ENCODE measurements at regions of chr2 and their contacts with region 1.

Region 1: DNA sequence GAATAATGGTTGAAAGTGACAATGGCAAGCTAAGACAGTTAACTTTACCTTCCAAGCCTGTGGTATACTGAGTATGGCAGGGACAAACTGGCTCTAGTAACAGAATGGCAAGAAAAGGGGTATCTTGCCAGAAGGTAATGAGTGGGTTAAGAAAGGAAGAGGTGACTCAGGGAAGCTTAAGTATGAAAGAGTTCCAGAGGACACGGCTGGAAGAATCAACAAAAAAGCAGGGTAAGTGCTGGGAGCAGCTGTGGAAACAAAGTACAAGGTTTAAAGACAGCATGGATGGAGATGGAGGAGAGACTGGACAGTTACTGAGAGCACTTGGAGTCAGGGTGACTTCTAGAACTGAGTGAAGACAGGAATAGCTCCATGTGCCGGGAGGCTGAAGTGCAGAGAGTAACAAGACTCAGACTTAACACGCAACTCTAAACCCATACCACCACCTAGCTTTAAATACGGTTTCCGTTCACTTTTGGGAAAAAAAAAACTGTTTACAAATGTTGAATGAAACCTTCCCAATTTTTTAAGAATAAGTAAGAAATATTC is 69.0 kb downstream of the REV1 start:
- DNase-seq: no peak
- ATAC-seq: peak; percentile 75 to 89 (median 84)
- H3K4me3 ChIP-seq: no peak overlapping the region
- H3K27ac ChIP-seq: peak overlapping the region in 7 of 10 donors; percentile 6 to 60 (median 29)
- H3K4me1 ChIP-seq: peaks cover 0 to 47% (median 16%) of the 10 kb centered on the region in 9 donors
- H3K27me3 ChIP-seq: no peaks in the 10 kb centered on the region
- CTCF ChIP-seq: peak in 3 of 9 donors; percentile 13 to 36 (median 13)

Region 2: DNA sequence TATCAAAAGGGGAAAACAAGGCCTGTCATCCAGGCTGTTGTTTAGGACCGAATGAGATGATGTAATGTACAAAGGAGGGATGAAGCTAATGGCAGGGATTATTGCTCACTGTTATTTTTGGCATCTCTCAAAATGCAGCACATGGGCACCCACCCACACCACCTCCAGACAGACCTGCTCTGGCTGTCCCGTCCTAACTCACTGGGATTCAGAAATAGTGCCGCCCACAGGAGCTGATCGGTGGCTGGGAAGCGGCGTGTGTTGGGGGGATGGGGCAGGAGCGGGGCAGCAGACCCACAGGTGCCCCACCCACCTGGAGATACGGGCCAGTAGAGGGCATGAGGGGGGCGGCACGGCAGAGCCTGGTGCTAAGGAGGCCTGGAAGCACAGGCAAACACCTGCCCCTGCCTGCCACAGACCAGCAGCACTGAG is 537.0 kb before region 1 on chr2:
- intact Hi-C with region 1: no loop called
- DNase-seq: no peak
- ATAC-seq: no peak
- H3K4me3 ChIP-seq: no peak overlapping the region
- H3K27ac ChIP-seq: no peak overlapping the region
- H3K4me1 ChIP-seq: no peaks in the 10 kb centered on the region
- H3K27me3 ChIP-seq: peaks cover 0 to 14% (median 0%) of the 10 kb centered on the region in 7 donors
- CTCF ChIP-seq: no peak

Region 3: GRCh38 chr2:99337113-99338028 is 83.5 kb before region 1 on chr2 and contains the start of gene EIF5B:
- intact Hi-C with region 1: loop called in 1 of 10 experiments (anchors 5 kb)
- DNase-seq: peak; percentile 95 to 97
- ATAC-seq: peak; percentile 91 to 96 (median 94)
- H3K4me3 ChIP-seq: peak within 1 kb of the TSS; percentile 66 to 100 (median 90)
- H3K27ac ChIP-seq: peak within 1 kb of the TSS; percentile 55 to 98 (median 89)
- H3K4me1 ChIP-seq: peaks cover 3 to 57% (median 42%) of the 10 kb centered on the region in 9 donors
- H3K27me3 ChIP-seq: no peaks in the 10 kb centered on the region
- CTCF ChIP-seq: peak; percentile 40 to 89 (median 70)
- total RNA-seq, gene EIF5B: 64.5 to 123 (median 91.8) TPM

Region 4: GRCh38 chr2:99403524-99403923 is 17.3 kb before region 1 on chr2:
- intact Hi-C with region 1: loop called in 1 of 10 experiments (anchors 2 kb)
- DNase-seq: no peak
- ATAC-seq: peak; percentile 49 to 73 (median 58)
- H3K4me3 ChIP-seq: peak overlapping the region in 2 of 10 donors; percentile 12 to 26
- H3K27ac ChIP-seq: peak overlapping the region in 9 of 10 donors; percentile 3 to 83 (median 57)
- H3K4me1 ChIP-seq: peaks cover 0 to 40% (median 15%) of the 10 kb centered on the region in 9 donors
- H3K27me3 ChIP-seq: no peaks in the 10 kb centered on the region
- CTCF ChIP-seq: peak in 3 of 9 donors; percentile 30 to 32 (median 31)

Region 5: DNA sequence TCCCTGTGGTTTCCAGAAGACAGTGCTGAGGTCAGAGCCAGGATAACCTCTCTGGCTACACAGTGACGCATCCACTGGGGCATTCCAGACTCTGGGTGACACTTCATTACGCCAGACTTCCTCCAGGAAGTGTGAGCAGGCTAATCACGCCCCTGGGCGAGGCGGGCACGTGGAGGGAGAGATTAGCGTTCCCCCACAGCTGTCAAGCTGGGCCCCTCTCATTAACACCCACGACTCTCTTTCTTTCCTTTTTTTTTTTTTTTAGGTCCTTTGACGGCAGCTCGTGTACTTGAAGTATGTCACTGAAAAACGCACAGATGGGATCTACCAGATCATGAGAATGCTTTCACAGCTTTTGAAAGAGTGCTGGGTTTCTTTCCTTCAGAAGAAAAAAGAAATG is 446.9 kb after region 1 on chr2:
- intact Hi-C with region 1: no loop called
- DNase-seq: no peak
- ATAC-seq: peak in 3 of 8 donors; percentile 28 to 64 (median 32)
- H3K4me3 ChIP-seq: no peak overlapping the region
- H3K27ac ChIP-seq: no peak overlapping the region
- H3K4me1 ChIP-seq: peaks cover 0 to 21% (median 14%) of the 10 kb centered on the region in 9 donors
- H3K27me3 ChIP-seq: no peaks in the 10 kb centered on the region
- CTCF ChIP-seq: no peak